Naive thymus-derived CD4-positive, alpha-beta T cell (primary cell): ENCODE measurements at regions of chr9 and their contacts with region 1.

Region 1: GRCh38 chr9:128552153-128552743 is at the start of gene SPTAN1:
- DNase-seq: peak; percentile 92 to 98 (median 96)
- ATAC-seq: peak; percentile 94
- H3K4me3 ChIP-seq: peak within 1 kb of the TSS; percentile 84
- H3K4me3 Mint-ChIP-seq: peak within 1 kb of the TSS in 7 of 10 donors; percentile 85 to 94 (median 92)
- H3K27ac ChIP-seq: peak within 1 kb of the TSS; percentile 94
- H3K27ac Mint-ChIP-seq: peak within 1 kb of the TSS; percentile 92 to 98 (median 97)
- H3K4me1 ChIP-seq: peaks cover 44 to 45% of the 10 kb centered on the region in 2 donors
- H3K4me1 Mint-ChIP-seq: peaks cover 15 to 38% (median 34%) of the 10 kb centered on the region in 7 donors
- H3K27me3 ChIP-seq: no peaks in the 10 kb centered on the region
- H3K27me3 Mint-ChIP-seq: no peaks in the 10 kb centered on the region
- total RNA-seq, gene SPTAN1: 336 to 433 (median 375) TPM

Region 2: DNA sequence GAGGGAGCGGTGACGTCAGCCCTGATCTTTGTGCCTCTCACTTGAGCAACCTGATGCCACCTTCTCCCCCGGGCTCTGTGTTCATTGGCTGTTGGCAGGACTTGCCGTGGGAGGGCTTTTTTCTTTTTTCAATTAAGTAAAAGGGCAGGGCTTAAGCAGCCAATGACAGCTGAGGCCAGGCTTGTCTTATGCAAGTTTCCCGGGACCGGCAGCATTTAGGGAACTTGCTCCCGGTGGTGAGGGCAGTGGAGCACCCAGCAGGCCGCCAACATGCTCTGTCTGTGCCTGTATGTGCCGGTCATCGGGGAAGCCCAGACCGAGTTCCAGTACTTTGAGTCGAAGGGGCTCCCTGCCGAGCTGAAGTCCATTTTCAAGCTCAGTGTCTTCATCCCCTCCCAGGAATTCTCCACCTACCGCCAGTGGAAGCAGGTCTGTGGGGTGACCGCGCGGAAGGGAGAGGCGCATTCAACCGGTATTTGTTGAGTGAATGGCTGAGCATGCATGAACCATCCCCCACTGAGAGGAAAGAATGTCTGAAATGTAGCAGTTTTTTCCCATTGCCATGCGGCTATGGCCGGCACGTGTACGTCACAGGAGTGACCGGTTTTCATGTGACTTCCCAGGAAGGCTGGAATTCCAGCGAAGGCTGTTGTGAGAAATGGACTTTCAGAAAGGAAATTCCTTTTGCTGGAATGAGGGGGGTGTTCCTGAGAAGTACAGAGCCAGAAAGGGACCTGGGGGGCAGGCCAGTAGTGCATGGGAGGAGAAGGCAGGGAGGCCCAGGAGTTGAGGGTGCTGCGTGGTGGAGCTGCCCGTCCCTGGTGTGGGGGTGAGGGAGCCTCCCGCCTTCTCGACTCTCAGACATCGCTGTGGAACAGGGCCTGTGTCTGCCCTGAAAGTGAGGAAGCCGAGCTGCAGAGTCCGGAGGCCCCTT is 453.7 kb before region 1 on chr9:
- CTCF ChIA-PET with region 1: no interaction called
- POLR2A ChIA-PET with region 1: no interaction called
- intact Hi-C with region 1: no loop called
- DNase-seq: peak in 8 of 9 donors; percentile 37 to 81 (median 52)
- ATAC-seq: peak; percentile 73
- H3K4me3 ChIP-seq: peak overlapping the region; percentile 17
- H3K4me3 Mint-ChIP-seq: peak overlapping the region; percentile 25 to 74 (median 60)
- H3K27ac ChIP-seq: peak overlapping the region; percentile 37
- H3K27ac Mint-ChIP-seq: peak overlapping the region; percentile 34 to 88 (median 64)
- H3K4me1 ChIP-seq: peaks cover 17 to 51% of the 10 kb centered on the region in 2 donors
- H3K4me1 Mint-ChIP-seq: peaks cover 36 to 84% (median 67%) of the 10 kb centered on the region in 7 donors
- H3K27me3 ChIP-seq: no peaks in the 10 kb centered on the region
- H3K27me3 Mint-ChIP-seq: no peaks in the 10 kb centered on the region

Region 3: GRCh38 chr9:128115187-128116103 is 436.8 kb before region 1 on chr9:
- CTCF ChIA-PET with region 1: no interaction called
- POLR2A ChIA-PET with region 1: no interaction called
- intact Hi-C with region 1: no loop called
- DNase-seq: no peak
- ATAC-seq: peak; percentile 57
- H3K4me3 ChIP-seq: no peak overlapping the region
- H3K4me3 Mint-ChIP-seq: no peak overlapping the region
- H3K27ac ChIP-seq: no peak overlapping the region
- H3K27ac Mint-ChIP-seq: no peak overlapping the region
- H3K4me1 ChIP-seq: peaks cover 0 to 7% of the 10 kb centered on the region in 2 donors
- H3K4me1 Mint-ChIP-seq: peaks cover 6 to 13% (median 7%) of the 10 kb centered on the region in 7 donors
- H3K27me3 ChIP-seq: no peaks in the 10 kb centered on the region
- H3K27me3 Mint-ChIP-seq: no peaks in the 10 kb centered on the region

Region 4: DNA sequence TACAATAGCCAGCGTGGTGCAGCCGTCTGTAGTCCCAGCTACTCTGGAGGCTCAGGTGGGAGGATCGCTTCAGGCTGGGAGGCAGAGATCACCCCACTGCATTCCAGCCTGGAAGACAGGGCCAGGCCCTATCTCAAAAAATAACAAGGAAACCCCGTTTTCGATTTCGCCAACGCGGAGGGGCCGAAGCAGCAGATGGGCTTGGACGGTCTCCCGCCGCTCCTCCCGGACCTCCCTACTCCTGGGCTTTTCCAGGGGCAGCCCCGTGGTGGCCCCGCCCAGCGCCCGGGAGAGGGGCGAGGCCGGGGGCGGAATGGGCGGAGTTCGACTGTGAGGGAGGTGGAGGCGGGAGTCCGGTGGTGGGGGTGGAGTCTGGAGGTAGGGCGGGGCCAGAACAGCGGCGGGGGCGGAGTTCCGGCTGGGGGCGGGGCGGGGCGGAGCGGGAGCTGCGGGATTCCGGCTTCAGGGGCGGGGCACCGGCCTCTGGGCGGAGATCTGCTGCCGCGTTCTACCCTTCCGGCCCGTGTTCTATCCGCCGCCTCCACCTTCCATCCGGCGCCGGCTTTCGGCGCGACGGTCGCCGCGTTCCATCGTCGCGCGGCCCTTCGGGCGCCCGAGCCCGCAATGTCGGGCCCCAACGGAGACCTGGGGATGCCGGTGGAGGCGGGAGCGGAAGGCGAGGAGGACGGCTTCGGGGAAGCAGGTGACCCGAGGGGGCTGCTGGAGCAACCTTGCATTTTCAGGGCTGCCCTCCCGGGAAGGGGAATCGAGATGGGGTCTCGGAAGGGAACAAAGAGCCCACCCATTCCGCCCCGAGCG is 392.3 kb before region 1 on chr9 and contains the start of gene BBLN:
- CTCF ChIA-PET with region 1: no interaction called
- POLR2A ChIA-PET with region 1: interaction called, 3 read pairs
- intact Hi-C with region 1: loop called in 1 of 2 experiments (anchors 1 kb)
- DNase-seq: peak; percentile 78 to 94 (median 87)
- ATAC-seq: peak; percentile 94
- H3K4me3 ChIP-seq: peak within 1 kb of the TSS; percentile 97
- H3K4me3 Mint-ChIP-seq: peak within 1 kb of the TSS; percentile 79 to 90 (median 82)
- H3K27ac ChIP-seq: peak within 1 kb of the TSS; percentile 78
- H3K27ac Mint-ChIP-seq: peak within 1 kb of the TSS; percentile 84 to 95 (median 93)
- H3K4me1 ChIP-seq: peaks cover 11 to 12% of the 10 kb centered on the region in 2 donors
- H3K4me1 Mint-ChIP-seq: peaks cover 0 to 28% (median 21%) of the 10 kb centered on the region in 7 donors
- H3K27me3 ChIP-seq: no peaks in the 10 kb centered on the region
- H3K27me3 Mint-ChIP-seq: no peaks in the 10 kb centered on the region
- total RNA-seq, gene BBLN: 42.7 to 87.8 (median 48.0) TPM

Region 5: GRCh38 chr9:128211186-128211980 is 340.9 kb before region 1 on chr9:
- CTCF ChIA-PET with region 1: no interaction called
- POLR2A ChIA-PET with region 1: no interaction called
- intact Hi-C with region 1: no loop called
- DNase-seq: no peak
- ATAC-seq: no peak
- H3K4me3 ChIP-seq: no peak overlapping the region
- H3K4me3 Mint-ChIP-seq: no peak overlapping the region
- H3K27ac ChIP-seq: no peak overlapping the region
- H3K27ac Mint-ChIP-seq: no peak overlapping the region
- H3K4me1 ChIP-seq: no peaks in the 10 kb centered on the region
- H3K4me1 Mint-ChIP-seq: peaks cover 0 to 4% (median 0%) of the 10 kb centered on the region in 7 donors
- H3K27me3 ChIP-seq: no peaks in the 10 kb centered on the region
- H3K27me3 Mint-ChIP-seq: peaks cover 0 to 36% (median 12%) of the 10 kb centered on the region in 5 donors

Region 6: GRCh38 chr9:128370826-128371621 is 181.2 kb before region 1 on chr9 and contains the start of gene URM1:
- CTCF ChIA-PET with region 1: no interaction called
- POLR2A ChIA-PET with region 1: interaction called, 5 read pairs
- intact Hi-C with region 1: loop called (anchors 1 kb)
- DNase-seq: peak; percentile 88 to 97 (median 95)
- ATAC-seq: peak; percentile 98
- H3K4me3 ChIP-seq: peak within 1 kb of the TSS; percentile 92
- H3K4me3 Mint-ChIP-seq: peak within 1 kb of the TSS; percentile 86 to 99 (median 96)
- H3K27ac ChIP-seq: peak within 1 kb of the TSS; percentile 94
- H3K27ac Mint-ChIP-seq: peak within 1 kb of the TSS; percentile 94 to 99 (median 98)
- H3K4me1 ChIP-seq: peaks cover 17% of the 10 kb centered on the region in 2 donors
- H3K4me1 Mint-ChIP-seq: peaks cover 18 to 41% (median 36%) of the 10 kb centered on the region in 7 donors
- H3K27me3 ChIP-seq: no peaks in the 10 kb centered on the region
- H3K27me3 Mint-ChIP-seq: no peaks in the 10 kb centered on the region
- total RNA-seq, gene URM1: 32.3 to 72.4 (median 47.5) TPM

Region 7: DNA sequence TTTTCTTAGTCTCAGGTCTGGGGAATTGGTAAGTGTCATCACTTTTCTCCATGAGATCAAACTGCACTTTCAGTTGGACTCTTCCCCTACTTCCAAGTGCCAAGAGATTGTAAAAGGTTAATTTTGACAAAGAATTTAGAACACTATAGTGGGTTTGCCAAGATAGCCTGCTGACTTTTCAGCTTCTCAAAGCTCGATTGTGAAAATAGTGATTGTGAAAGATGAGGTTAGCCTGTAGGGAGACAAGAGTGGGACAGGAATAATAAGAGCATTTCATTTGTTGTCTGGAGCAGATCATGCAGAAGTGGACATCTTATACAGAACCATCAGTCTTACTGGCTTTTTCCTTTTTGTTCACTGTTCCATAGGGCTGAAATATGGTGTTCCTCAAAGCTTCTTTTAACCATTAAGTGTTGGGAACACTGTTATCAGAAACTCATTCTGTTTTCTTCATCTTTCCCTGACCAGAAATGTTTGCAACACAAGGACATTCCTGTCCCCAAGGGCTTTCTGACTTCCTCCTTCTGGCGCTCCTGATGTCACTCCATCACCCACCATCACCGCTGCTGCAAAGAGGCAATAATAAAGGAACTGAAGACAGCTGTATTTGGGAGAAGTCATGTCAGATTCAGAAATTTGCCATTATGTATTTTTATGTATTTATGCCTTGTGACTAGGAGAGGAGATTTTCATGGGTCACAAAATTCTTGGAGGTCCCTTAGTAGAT is 11.5 kb before region 1 on chr9:
- CTCF ChIA-PET with region 1: interaction called, 3 read pairs
- POLR2A ChIA-PET with region 1: interaction called, 53 read pairs
- intact Hi-C with region 1: no loop called
- DNase-seq: no peak
- ATAC-seq: no peak
- H3K4me3 ChIP-seq: no peak overlapping the region
- H3K4me3 Mint-ChIP-seq: no peak overlapping the region
- H3K27ac ChIP-seq: no peak overlapping the region
- H3K27ac Mint-ChIP-seq: peak overlapping the region in 3 of 9 donors; percentile 4 to 52 (median 9)
- H3K4me1 ChIP-seq: peaks cover 0 to 8% of the 10 kb centered on the region in 2 donors
- H3K4me1 Mint-ChIP-seq: peaks cover 0 to 2% (median 0%) of the 10 kb centered on the region in 7 donors
- H3K27me3 ChIP-seq: no peaks in the 10 kb centered on the region
- H3K27me3 Mint-ChIP-seq: no peaks in the 10 kb centered on the region

Region 8: GRCh38 chr9:128688512-128689292 is 136.5 kb after region 1 on chr9 and contains the start of gene SET:
- CTCF ChIA-PET with region 1: interaction called, 3 read pairs
- POLR2A ChIA-PET with region 1: interaction called, 12 read pairs
- intact Hi-C with region 1: loop called (anchors 1 to 5 kb)
- DNase-seq: peak; percentile 86 to 97 (median 93)
- ATAC-seq: peak; percentile 89
- H3K4me3 ChIP-seq: peak within 1 kb of the TSS; percentile 84
- H3K4me3 Mint-ChIP-seq: peak within 1 kb of the TSS; percentile 86 to 99 (median 90)
- H3K27ac ChIP-seq: peak within 1 kb of the TSS; percentile 85
- H3K27ac Mint-ChIP-seq: peak within 1 kb of the TSS; percentile 87 to 99 (median 97)
- H3K4me1 ChIP-seq: peaks cover 22 to 48% of the 10 kb centered on the region in 2 donors
- H3K4me1 Mint-ChIP-seq: peaks cover 45 to 67% (median 59%) of the 10 kb centered on the region in 7 donors
- H3K27me3 ChIP-seq: no peaks in the 10 kb centered on the region
- H3K27me3 Mint-ChIP-seq: no peaks in the 10 kb centered on the region
- total RNA-seq, gene SET: 222 to 488 (median 270) TPM

Region 9: DNA sequence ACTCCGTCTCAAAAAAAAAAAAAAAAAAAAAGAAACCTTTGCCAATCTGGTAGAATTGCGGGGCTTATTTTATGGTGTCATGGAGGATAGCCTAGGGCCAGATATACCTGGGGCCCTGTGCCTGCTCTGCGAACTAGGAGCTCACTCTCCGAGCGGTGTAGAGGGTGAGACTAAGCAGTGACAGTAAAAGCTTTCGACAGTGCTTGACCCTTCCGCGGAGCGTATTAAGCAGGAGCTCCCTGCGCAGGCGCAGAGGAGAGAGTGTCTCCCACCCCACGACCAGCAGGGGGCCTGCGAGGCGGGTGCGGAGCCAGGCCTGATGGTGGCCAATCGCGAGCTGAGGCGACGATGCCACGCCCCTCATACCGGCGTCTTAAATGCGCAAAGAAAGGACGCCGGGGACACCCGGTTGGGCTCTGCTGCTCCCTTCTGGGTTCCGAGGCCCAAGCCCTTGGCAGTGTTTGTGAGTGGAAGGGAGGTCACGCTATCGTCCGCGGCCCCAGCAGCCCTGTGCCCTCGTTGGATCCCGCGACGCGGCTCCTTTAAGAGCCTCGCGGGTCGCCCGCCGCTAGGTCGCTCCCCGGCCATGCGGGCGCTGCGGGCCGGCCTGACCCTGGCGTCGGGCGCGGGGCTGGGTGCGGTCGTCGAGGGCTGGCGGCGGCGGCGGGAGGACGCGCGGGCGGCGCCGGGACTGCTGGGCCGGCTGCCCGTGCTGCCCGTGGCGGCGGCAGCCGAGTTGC is 266.0 kb after region 1 on chr9 and contains the start of gene ENDOG:
- CTCF ChIA-PET with region 1: interaction called, 3 read pairs
- POLR2A ChIA-PET with region 1: interaction called, 4 read pairs
- intact Hi-C with region 1: loop called in 1 of 2 experiments (anchors 1 kb)
- DNase-seq: peak; percentile 94 to 99 (median 97)
- ATAC-seq: peak; percentile 98
- H3K4me3 ChIP-seq: peak within 1 kb of the TSS; percentile 67
- H3K4me3 Mint-ChIP-seq: peak within 1 kb of the TSS; percentile 84 to 92 (median 91)
- H3K27ac ChIP-seq: peak within 1 kb of the TSS; percentile 72
- H3K27ac Mint-ChIP-seq: peak within 1 kb of the TSS; percentile 79 to 94 (median 87)
- H3K4me1 ChIP-seq: no peaks in the 10 kb centered on the region
- H3K4me1 Mint-ChIP-seq: peaks cover 7 to 29% (median 12%) of the 10 kb centered on the region in 7 donors
- H3K27me3 ChIP-seq: no peaks in the 10 kb centered on the region
- H3K27me3 Mint-ChIP-seq: no peaks in the 10 kb centered on the region
- total RNA-seq, gene ENDOG: 9.4 to 18.3 (median 14.7) TPM